Transverse colon (tissue), 4 donors: ENCODE measurements at regions of chr20 and their contacts with region 1.

Region 1: DNA sequence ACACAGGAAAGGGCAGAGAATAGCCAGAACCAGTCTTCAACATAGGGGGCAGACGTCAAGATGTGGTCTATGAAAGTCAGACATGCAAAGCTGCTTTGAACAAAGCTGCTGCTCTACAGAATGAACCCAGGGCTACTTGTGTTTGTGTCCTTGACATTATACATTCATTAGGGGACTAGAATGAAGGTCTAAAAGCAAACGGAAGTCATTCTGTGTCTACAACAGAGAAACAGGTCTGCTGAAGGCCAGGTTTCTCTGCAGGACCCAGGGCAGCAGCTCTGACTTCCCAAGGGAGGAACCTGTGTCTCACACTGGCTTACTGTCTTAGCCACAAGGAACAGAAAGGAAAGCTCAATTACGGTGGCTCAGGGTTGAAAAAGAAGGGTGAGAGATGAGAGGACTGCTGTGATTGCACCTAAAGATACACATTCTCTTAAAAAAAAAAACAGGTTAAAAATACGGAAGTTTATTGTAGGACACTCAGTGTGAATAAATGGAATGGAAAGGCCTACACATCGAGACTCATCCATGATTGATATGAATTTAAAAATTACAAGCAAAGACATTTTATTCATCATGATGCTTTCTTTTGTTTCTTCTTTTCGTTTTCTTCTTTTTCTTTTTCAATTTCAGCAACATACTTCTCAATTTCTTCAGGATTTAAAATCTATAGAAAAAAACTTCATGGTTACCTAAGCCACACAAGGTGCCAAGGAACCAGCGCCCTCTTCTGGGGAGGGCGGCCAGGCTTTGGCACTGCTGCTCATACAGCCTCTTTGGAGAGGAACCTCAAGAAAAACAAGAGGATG is 6.7 kb downstream of the PSMA7 start:
- DNase-seq: peak; percentile 72
- H3K4me3 ChIP-seq: no peak overlapping the region
- H3K27ac ChIP-seq: no peak overlapping the region
- H3K4me1 ChIP-seq: peaks cover 7 to 16% (median 8%) of the 10 kb centered on the region in 4 donors
- H3K27me3 ChIP-seq: no peaks in the 10 kb centered on the region
- CTCF ChIP-seq: peak; percentile 69 to 78 (median 73)
- EP300 ChIP-seq: no peak
- POLR2A ChIP-seq: no peak

Region 2: GRCh38 chr20:62010551-62011402 is 125.7 kb before region 1 on chr20:
- in situ Hi-C with region 1: loop called in 2 of 4 experiments (anchors 5 to 10 kb)
- intact Hi-C with region 1: no loop called
- DNase-seq: peak; percentile 53
- H3K4me3 ChIP-seq: no peak overlapping the region
- H3K27ac ChIP-seq: no peak overlapping the region
- H3K4me1 ChIP-seq: peaks cover 0 to 4% (median 0%) of the 10 kb centered on the region in 4 donors
- H3K27me3 ChIP-seq: no peaks in the 10 kb centered on the region
- CTCF ChIP-seq: peak; percentile 56 to 73 (median 63)
- EP300 ChIP-seq: no peak
- POLR2A ChIP-seq: no peak

Region 3: GRCh38 chr20:62025832-62026563 is 110.5 kb before region 1 on chr20:
- in situ Hi-C with region 1: loop called in 1 of 4 experiments (anchors 10 kb)
- intact Hi-C with region 1: loop called (anchors 5 kb)
- DNase-seq: no peak
- H3K4me3 ChIP-seq: no peak overlapping the region
- H3K27ac ChIP-seq: no peak overlapping the region
- H3K4me1 ChIP-seq: peaks cover 2 to 20% (median 9%) of the 10 kb centered on the region in 4 donors
- H3K27me3 ChIP-seq: no peaks in the 10 kb centered on the region
- CTCF ChIP-seq: peak; percentile 16 to 37 (median 30)
- EP300 ChIP-seq: no peak
- POLR2A ChIP-seq: no peak

Region 4: DNA sequence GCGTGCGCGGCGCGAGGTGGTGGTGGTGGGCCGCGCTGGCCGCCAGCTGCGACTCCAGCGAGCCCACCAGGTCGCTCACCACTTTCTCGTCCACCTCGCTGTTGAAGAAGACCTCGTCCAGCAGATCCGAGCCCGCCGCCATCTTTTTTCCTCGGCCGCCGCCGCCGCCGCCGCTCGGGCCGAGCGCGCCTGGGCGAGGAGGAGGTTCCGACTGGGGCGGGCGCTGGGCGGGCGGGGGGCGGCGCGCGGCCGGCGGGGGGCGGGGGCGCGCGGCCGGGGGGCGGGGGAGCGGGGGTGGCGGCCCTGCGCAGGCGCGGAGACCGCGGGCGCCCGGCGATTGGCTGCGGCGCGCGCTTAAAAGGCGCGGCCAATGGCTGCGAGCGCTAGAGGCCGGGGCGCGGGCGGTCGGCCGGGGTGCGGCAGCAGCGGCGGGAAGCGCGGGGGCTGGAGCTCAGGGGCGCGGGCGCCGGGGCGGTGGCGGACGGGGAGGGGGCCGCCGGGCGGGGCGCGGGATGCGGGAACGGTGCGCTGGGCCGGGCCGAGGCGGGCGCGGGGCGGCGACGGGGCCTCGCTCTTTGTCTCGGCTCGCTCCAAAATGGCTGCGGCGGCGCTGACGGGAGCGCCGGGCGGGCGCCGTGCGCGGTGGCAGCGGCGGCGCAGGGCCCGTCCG is 70.7 kb before region 1 on chr20 and contains the start of gene TAF4:
- in situ Hi-C with region 1: no loop called
- intact Hi-C with region 1: loop called (anchors 5 kb)
- DNase-seq: peak; percentile 81
- H3K4me3 ChIP-seq: peak within 1 kb of the TSS; percentile 58 to 73 (median 67)
- H3K27ac ChIP-seq: peak within 1 kb of the TSS; percentile 89 to 96 (median 92)
- H3K4me1 ChIP-seq: peaks cover 41 to 64% (median 49%) of the 10 kb centered on the region in 4 donors
- H3K27me3 ChIP-seq: no peaks in the 10 kb centered on the region
- CTCF ChIP-seq: no peak
- EP300 ChIP-seq: no peak
- POLR2A ChIP-seq: peak; percentile 1
- total RNA-seq, gene TAF4: 18.9 to 39.5 (median 24.3) TPM

Region 5: GRCh38 chr20:62104791-62105345 is 31.6 kb before region 1 on chr20:
- in situ Hi-C with region 1: no loop called
- intact Hi-C with region 1: loop called (anchors 1 kb)
- DNase-seq: peak; percentile 41
- H3K4me3 ChIP-seq: no peak overlapping the region
- H3K27ac ChIP-seq: peak overlapping the region in 3 of 4 donors; percentile 18 to 34 (median 31)
- H3K4me1 ChIP-seq: peaks cover 0 to 13% (median 9%) of the 10 kb centered on the region in 4 donors
- H3K27me3 ChIP-seq: peaks cover 8% of the 10 kb centered on the region
- CTCF ChIP-seq: no peak
- EP300 ChIP-seq: no peak
- POLR2A ChIP-seq: no peak